Activated B cell treated with CpG ODN at 0.5 μM for 24 hours (primary cell): ENCODE measurements at regions of chr10 and their contacts with region 1.

Region 1: GRCh38 chr10:24642622-24643417 is 80.9 kb downstream of the ARHGAP21 start:
- DNase-seq: no peak
- ATAC-seq: peak; percentile 56
- H3K4me3 Mint-ChIP-seq: no peak overlapping the region
- H3K27ac Mint-ChIP-seq: no peak overlapping the region
- H3K4me1 Mint-ChIP-seq: peaks cover 4% of the 10 kb centered on the region
- H3K27me3 Mint-ChIP-seq: no peaks in the 10 kb centered on the region
- CTCF ChIP-seq: peak; percentile 81

Region 2: GRCh38 chr10:23918839-23919238 is 724.0 kb before region 1 on chr10:
- CTCF ChIA-PET with region 1: no interaction called
- POLR2A ChIA-PET with region 1: no interaction called
- intact Hi-C with region 1: no loop called
- DNase-seq: no peak
- ATAC-seq: no peak
- H3K4me3 Mint-ChIP-seq: no peak overlapping the region
- H3K27ac Mint-ChIP-seq: no peak overlapping the region
- H3K4me1 Mint-ChIP-seq: no peaks in the 10 kb centered on the region
- H3K27me3 Mint-ChIP-seq: no peaks in the 10 kb centered on the region
- CTCF ChIP-seq: no peak

Region 3: GRCh38 chr10:24882047-24882698 is 239.4 kb after region 1 on chr10:
- CTCF ChIA-PET with region 1: no interaction called
- POLR2A ChIA-PET with region 1: interaction called, 3 read pairs
- intact Hi-C with region 1: loop called (anchors 10 kb)
- DNase-seq: no peak
- ATAC-seq: peak; percentile 61
- H3K4me3 Mint-ChIP-seq: peak overlapping the region; percentile 21
- H3K27ac Mint-ChIP-seq: no peak overlapping the region
- H3K4me1 Mint-ChIP-seq: peaks cover 27% of the 10 kb centered on the region
- H3K27me3 Mint-ChIP-seq: no peaks in the 10 kb centered on the region
- CTCF ChIP-seq: no peak

Region 4: GRCh38 chr10:24952707-24953645 is 310.2 kb after region 1 on chr10:
- CTCF ChIA-PET with region 1: interaction called, 6 read pairs
- POLR2A ChIA-PET with region 1: no interaction called
- intact Hi-C with region 1: loop called (anchors 1 kb)
- DNase-seq: peak; percentile 48
- ATAC-seq: peak; percentile 86
- H3K4me3 Mint-ChIP-seq: peak overlapping the region; percentile 76
- H3K27ac Mint-ChIP-seq: peak overlapping the region; percentile 51
- H3K4me1 Mint-ChIP-seq: peaks cover 7% of the 10 kb centered on the region
- H3K27me3 Mint-ChIP-seq: peaks cover 15% of the 10 kb centered on the region
- CTCF ChIP-seq: no peak

Region 5: DNA sequence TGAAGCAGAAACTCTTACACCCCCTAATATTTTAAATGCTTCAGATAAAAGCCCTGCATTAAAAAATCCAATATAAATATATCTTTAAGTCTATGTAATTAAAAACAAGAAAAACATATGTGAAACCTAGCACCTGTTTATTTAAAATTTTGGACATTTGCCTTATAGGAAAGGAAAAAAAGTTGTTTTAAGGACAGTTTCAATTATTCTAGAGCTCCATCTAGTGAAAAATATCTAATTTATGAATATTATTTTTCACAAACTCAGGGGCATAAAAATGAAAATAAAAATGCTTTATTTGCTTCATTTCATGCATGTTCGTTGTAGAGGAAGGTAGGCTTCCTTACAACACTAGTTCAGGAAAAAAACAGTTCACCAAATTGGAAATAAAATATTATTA is 347.0 kb after region 1 on chr10:
- CTCF ChIA-PET with region 1: interaction called, 3 read pairs
- POLR2A ChIA-PET with region 1: no interaction called
- intact Hi-C with region 1: loop called (anchors 1 kb)
- DNase-seq: no peak
- ATAC-seq: no peak
- H3K4me3 Mint-ChIP-seq: no peak overlapping the region
- H3K27ac Mint-ChIP-seq: no peak overlapping the region
- H3K4me1 Mint-ChIP-seq: no peaks in the 10 kb centered on the region
- H3K27me3 Mint-ChIP-seq: peaks cover 5% of the 10 kb centered on the region
- CTCF ChIP-seq: no peak

Region 6: GRCh38 chr10:25080880-25081581 is 438.2 kb after region 1 on chr10:
- CTCF ChIA-PET with region 1: interaction called, 6 read pairs
- POLR2A ChIA-PET with region 1: no interaction called
- intact Hi-C with region 1: loop called (anchors 1 kb)
- DNase-seq: peak; percentile 33
- ATAC-seq: peak; percentile 28
- H3K4me3 Mint-ChIP-seq: no peak overlapping the region
- H3K27ac Mint-ChIP-seq: no peak overlapping the region
- H3K4me1 Mint-ChIP-seq: no peaks in the 10 kb centered on the region
- H3K27me3 Mint-ChIP-seq: peaks cover 13% of the 10 kb centered on the region
- CTCF ChIP-seq: no peak

Region 7: DNA sequence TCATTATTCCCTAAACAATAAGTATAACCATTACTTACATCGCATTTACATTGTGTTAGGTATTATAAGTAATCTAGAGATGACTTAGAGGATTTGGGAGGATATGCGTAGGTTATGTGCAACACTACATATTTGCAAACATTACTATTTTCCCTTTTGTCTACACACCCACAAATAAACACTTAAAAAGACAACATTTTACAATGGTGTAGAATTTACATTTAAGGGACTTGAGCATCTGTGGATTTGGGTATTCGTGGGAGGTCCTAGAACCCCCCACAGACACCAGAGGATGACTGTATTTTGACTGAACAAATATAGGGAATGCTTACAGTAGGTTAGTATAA is 1071.0 kb after region 1 on chr10:
- CTCF ChIA-PET with region 1: no interaction called
- POLR2A ChIA-PET with region 1: no interaction called
- intact Hi-C with region 1: loop called (anchors 5 kb)
- DNase-seq: no peak
- ATAC-seq: no peak
- H3K4me3 Mint-ChIP-seq: no peak overlapping the region
- H3K27ac Mint-ChIP-seq: no peak overlapping the region
- H3K4me1 Mint-ChIP-seq: no peaks in the 10 kb centered on the region
- H3K27me3 Mint-ChIP-seq: peaks cover 10% of the 10 kb centered on the region
- CTCF ChIP-seq: no peak